Tibial artery (tissue), 4 donors: ENCODE measurements at regions of chr12 and their contacts with region 1.

Region 1: DNA sequence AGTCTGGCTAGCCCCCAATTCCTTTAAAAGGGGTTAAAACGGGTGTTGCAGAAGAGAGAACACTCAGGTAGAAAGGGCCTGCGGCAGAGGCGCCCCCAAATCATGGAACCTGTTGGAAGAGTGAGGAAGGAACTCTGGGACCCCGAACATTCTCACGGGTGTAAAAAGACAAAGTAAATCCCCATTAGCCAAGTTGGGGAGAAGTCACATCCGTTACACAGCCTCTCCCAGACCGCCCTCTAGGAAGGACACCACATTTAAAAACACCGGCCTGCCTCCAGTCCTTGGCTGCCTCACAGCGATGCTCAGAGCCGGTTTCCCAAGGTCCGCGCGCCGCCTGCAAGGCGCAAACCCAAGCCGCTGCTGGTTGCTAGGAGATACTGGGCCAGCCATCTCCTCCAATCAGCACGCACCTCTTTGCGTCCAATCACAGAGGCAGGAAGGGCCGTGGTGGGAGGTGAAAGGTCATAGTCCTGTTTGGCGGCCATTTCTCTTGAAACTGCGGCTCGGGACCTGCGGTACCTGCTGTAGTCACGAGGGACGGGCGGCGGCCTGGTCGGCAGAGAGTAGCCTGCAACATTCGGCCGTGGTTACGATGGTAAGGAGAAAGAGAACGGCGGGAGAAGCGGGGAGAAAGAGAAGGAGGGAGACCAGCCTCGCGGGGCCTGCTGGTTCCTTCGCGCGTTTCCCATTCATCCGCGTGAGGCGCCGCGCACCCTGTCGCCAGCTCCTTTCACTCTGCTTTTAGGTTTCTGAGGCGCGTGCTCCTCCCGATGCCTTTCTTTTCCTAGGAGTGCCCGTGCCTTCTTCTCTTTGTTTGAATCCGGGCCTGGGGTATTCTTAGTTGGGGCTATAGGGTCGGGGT is at the start of gene SNRPF:
- DNase-seq: peak; percentile 95 to 97
- H3K4me3 ChIP-seq: peak within 1 kb of the TSS; percentile 65 to 80
- H3K27ac ChIP-seq: peak within 1 kb of the TSS; percentile 57 to 67
- H3K4me1 ChIP-seq: peaks cover 0 to 21% (median 17%) of the 10 kb centered on the region in 4 donors
- H3K27me3 ChIP-seq: peaks cover 0 to under 1% of the 10 kb centered on the region in 2 donors
- CTCF ChIP-seq: no peak

Region 2: DNA sequence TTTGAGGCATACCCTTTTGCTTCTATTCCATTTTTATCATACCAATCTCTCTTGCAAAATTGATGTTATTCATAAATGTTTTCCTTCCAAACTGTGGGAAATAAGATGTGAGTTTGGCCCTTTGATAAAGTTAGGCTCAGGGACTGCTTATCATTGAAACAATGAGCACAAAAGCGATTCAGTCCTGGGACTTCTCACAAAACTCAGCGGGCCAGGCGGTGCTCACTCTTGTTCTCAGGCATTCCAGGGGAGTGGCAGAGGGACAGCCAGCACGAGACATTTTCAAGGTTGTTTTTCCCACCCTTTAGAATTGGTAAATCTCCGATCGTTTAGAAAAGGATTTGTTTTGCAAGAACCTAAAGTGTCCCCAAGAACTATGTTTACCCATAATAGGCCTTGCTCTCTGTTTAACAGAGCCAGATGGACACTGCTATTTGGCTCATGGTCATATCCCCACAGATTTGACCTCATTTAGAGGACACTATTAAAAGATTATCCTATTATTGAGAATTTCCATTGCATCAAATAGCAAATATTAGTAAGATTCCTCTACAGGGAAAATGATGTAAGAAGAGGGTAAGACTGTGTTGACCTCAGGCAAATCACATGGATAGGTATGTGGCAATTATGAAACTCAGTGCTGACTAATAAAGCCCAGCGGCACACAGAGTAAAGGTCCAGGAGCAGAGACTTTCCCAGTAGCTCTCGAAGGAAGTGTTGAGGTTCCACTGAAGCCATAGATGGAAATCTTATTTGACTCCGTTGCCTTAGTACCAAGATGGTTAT is 204.8 kb before region 1 on chr12:
- intact Hi-C with region 1: no loop called
- DNase-seq: no peak
- H3K4me3 ChIP-seq: no peak overlapping the region
- H3K27ac ChIP-seq: peak overlapping the region; percentile 67 to 78
- H3K4me1 ChIP-seq: peaks cover 0 to 32% (median 15%) of the 10 kb centered on the region in 4 donors
- H3K27me3 ChIP-seq: no peaks in the 10 kb centered on the region
- CTCF ChIP-seq: no peak

Region 3: DNA sequence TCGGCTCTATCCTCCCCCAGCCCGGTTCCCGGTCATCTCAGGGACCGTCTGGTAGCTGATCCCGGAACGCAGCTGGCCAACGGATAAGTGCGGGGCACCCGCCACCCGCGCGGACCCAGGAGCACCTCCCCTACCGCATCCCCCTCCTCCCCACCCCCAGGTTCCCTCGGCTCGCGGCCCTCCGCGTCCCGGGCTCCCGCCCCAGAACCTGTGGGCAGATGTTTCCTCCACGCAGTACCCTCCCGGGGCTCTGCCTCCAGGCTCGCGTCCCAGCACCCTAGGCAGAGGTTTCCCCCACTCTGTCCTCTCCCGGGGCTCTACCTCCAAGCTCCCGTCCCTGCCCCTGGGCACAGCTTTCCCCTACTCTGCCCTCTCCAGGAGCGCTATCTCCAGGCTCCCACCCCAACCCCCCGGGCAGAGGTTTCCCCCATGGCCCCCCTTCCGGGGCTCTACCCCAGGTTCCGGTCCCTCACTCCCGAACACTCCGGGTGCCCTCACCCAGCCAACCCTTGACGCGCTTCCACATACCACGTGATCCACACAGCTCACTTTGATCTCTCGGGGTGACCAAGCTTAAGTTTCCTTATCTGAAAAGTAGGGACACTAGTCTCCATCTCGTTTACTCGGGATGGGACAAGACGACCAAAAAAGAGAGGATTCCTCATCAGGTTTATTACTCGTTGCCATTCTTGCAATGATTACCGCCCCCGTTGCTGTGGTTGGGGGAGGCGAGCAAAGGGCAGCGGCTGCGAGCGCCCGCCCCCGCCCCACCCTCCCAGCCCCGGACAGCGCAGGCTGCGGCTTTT is 84.0 kb after region 1 on chr12 and contains the start of gene CCDC38:
- intact Hi-C with region 1: loop called (anchors 10 kb)
- DNase-seq: peak; percentile 73 to 79
- H3K4me3 ChIP-seq: peak within 1 kb of the TSS; percentile 71 to 77
- H3K27ac ChIP-seq: peak within 1 kb of the TSS; percentile 66 to 70
- H3K4me1 ChIP-seq: peaks cover 0 to 15% (median 4%) of the 10 kb centered on the region in 4 donors
- H3K27me3 ChIP-seq: no peaks in the 10 kb centered on the region
- CTCF ChIP-seq: no peak